Dorsolateral prefrontal cortex (tissue), 120 donors: ENCODE measurements at regions of chr2 and their contacts with region 1.

Region 1: GRCh38 chr2:14678761-14679160 is 46.2 kb downstream of the LRATD1 start:
- DNase-seq: no peak
- H3K4me3 ChIP-seq: no peak overlapping the region
- H3K27ac ChIP-seq: no peak overlapping the region
- H3K27me3 ChIP-seq: no peaks in the 10 kb centered on the region
- CTCF ChIP-seq: no peak

Region 2: GRCh38 chr2:14756976-14757657 is 78.4 kb after region 1 on chr2:
- intact Hi-C with region 1: loop called in 1 of 2 experiments (anchors 2 kb)
- DNase-seq: peak in 4 of 10 donors; percentile 36 to 56 (median 52)
- H3K4me3 ChIP-seq: no peak overlapping the region
- H3K27ac ChIP-seq: peak overlapping the region in 26 of 59 donors; percentile 2 to 69 (median 34)
- H3K27me3 ChIP-seq: no peaks in the 10 kb centered on the region
- CTCF ChIP-seq: no peak

Region 3: DNA sequence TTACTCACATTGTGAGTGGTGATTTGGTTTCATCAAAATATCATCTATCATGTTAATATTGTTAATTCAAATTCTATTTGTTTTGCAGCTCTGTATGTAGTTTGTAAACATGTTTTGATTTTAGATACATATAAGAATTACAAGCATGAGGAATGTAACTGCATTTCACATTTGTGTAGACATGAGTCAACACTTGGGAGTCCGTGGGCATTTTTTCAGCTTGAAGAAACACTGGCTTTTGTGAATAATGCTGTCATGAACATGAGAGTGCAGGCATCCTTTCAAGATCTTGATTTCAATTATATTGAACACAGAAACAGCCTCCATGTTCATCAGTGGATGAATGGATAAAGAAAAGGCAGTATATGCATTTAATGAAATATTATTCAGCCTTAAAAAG is 148.5 kb after region 1 on chr2:
- intact Hi-C with region 1: no loop called
- DNase-seq: no peak
- H3K4me3 ChIP-seq: no peak overlapping the region
- H3K27ac ChIP-seq: no peak overlapping the region
- H3K27me3 ChIP-seq: no peaks in the 10 kb centered on the region
- CTCF ChIP-seq: no peak